ENCODE measurements at regions of chrX and their contacts with region 1.

Region 1: DNA sequence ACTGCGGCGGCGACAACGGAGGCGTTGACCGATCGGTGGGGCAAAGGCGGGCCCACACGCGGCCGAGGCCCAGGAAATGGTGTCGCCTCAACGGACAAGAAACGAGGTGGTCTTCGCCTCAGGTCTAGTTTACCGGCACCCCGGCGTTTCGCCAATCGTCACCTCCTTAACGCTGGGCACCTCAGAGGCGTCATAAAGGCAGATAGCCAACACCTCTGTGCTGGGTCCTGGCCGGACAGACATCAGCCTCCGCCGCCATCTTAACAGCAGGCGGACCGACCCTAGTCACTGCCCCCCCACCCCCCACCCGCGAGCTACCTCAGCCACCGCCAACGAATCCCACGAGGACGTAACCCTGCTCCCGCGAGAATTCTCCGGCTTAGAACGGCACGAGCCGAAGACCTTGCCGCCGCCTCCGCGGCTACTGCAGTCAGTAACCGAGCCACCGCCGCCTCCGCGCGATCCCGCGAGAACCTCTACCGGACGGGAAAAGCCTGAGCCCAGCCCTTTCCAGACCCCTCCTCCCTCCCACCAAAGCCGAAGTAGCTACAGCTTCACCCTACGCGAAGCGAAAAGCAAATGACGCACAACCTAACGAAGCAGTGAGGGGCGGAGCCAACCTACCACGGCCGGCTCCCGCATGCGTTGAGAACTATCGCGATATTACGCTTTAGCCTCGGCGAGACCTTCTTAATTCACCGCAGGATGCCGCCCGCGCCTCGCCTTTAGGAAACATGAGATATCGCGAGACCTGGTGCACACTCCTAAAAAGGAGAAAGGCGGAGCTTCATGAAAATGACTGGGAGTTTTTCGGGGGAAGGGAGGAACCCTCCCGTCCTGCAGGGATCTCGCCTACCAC is 2.7 kb downstream of the HUWE1 start:
- DNase-seq: peak; percentile 78 to 99 (median 88)

Region 2: DNA sequence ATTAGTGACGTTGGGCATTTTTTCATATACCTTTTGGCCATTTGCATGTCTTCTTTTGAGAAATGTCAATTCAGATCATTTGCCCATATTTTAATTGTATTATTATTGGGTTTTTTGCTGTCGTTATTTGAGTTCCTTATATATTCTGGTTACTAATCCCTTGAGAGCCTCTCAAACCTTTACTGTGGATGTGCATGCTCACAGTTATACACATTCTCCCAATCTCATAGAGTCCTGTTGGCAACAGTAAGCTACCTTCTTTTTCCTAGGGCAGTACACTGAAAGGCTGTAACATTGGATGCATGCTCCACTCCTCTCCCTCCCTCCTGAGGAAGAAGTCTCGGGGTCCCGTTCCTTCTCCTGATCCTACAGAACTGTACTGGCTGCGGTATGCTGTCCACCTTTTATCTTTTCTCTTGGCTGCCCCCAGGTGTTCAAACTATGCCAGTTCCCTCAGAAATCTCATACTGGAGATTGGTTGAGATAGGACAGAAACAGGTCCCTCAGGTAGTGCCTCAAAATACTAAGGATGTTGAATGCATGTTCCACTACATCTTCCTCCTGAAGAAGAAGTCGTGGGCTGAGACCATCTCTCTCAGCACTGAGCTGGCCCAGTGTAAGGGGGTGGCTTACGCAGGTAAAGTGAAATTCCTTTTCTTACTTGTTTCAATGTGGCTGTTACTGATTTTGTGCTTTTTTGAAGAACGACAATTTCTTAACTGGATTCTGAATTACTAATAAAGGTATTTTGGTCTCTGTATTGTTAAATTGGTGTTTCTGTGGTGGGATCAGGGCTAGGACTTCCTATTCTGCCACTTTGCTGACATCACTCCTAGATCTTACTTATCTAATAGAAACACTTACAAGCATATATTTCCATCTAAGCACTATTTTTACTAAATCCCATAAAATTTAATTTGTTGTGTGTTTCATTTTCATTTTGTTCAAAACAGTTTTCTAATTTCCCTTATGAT is 148.2 kb after region 1 on chrX:
- intact Hi-C with region 1: loop called (anchors 10 kb)
- DNase-seq: peak in 2 of 10 donors; percentile 4 to 7

Region 3: DNA sequence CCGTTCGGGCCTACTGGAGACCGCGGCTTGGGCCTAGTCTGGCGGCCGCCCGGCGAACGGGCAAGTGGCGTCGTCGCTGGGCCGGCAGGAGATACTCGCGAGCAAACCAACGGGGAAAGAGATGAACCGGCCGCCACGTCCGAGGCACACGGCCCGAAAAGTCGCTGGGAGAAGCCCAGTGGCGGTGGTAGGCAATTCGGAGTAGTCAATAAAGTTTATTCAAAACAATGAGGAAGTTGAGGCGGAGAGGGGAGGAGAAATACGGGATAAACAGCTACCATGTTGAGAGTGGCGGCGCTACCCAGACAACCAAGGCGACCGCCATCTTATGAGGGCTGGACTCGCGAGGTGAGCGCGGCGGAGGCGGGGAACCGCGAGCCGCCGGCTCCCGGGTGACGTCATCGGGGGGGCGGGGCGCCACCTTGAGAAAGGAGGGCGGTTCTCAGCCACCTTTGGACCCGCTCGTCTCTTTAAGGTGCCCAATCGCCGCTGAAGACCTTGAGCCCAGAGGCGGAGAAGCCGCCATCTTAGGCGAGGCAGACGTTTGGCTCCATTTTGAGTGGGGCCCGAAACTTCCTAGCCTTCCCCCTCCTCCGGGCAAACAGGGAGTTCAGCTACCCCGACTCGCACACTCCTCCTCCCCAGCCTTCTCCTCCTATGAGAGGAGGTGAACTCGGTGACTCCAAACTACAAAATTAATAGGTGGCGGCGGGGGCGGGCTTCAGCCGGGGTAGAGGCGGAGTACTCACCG is 360.5 kb after region 1 on chrX and contains the start of gene PHF8:
- intact Hi-C with region 1: loop called (anchors 10 kb)
- DNase-seq: peak; percentile 78 to 98 (median 87)

Region 4: DNA sequence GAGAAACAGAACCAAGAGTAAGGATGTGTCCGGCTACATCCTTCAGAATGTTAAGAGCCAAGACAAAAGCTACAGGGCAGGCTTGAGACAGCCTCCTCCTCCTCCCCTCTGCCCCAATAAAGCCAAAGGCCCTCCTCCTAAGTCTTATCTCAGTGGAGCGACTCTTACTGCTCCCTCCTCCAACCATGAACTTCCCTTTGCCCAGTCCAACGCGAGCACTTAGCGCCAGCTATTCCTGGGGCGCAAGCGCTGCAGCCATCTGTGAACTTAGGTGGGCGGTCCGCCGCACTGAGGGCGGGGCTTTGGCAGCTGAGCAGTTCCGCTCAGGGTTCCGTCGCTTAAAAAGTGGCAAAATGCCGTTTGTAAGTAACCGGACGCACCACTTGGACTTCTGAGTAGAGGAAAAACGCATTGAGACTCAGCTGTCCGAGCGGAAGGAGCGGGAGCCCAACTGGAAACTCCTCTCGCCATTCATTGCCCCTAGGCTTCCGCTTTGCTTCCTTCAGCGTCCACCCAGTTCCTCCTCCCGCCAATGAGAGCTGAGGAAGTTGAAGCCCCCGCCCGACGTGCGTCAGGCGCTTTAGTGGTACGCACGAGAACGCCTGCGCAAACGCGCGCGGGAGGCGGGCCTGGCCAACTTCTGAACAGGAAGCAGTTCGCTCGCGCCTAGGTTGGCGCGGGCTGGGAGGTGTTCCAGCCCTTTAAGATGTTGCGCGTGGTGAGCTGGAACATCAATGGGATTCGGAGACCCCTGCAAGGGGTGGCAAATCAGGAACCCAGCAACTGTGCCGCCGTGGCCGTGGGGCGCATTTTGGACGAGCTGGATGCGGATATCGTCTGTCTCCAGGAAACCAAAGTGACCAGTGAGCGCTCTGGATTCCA is 1316.2 kb after region 1 on chrX and contains the start of gene APEX2:
- intact Hi-C with region 1: loop called (anchors 10 kb)
- DNase-seq: peak; percentile 74 to 98 (median 84)